ENCODE measurements at regions of chr1 and their contacts with region 1.

Region 1: GRCh38 chr1:246689409-246690008 is 34.7 kb upstream of the SCCPDH start:
- DNase-seq: peak; percentile 78
- ATAC-seq: peak; percentile 85

Region 2: GRCh38 chr1:246632281-246633087 is 57.0 kb before region 1 on chr1:
- intact Hi-C with region 1: no loop called
- DNase-seq: no peak
- ATAC-seq: no peak

Region 3: GRCh38 chr1:246753670-246754535 is 64.4 kb after region 1 on chr1:
- intact Hi-C with region 1: loop called (anchors 2 kb)
- DNase-seq: peak; percentile 75
- ATAC-seq: peak; percentile 84

Region 4: GRCh38 chr1:246971090-246971721 is 281.7 kb after region 1 on chr1:
- intact Hi-C with region 1: loop called (anchors 10 kb)
- DNase-seq: peak; percentile 71
- ATAC-seq: no peak

Measured in Right ventricle myocardium inferior (tissue), 1 donor.